IMR-90 (cell line): ENCODE measurements at regions of chr4 and their contacts with region 1.

Region 1: DNA sequence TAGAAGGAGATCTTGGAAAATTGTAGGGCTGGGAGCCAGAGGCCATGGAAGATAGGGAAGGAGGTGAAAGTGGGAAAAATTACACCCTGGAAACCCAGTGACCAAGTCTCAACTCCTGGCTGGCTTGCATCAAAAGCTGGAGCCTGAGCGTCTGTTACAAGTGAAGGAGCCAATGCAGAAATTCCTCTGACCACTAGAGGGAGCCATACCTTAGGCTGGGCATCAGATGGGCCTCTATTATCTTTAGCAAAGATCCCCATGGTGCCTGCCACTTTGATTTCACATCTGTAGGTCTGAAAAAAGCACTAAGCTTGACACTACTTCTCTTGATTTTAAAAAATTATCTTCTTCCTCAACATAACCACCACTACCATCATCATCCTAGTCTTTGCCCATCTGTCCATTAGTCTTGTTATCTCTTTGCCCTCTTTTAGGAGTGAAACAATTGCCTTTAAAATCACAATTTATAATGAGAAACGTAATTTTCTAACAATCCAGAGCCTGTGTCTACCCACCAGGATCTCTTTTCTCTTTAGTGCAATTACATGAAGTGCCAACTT is 62.9 kb downstream of the ANAPC4 start:
- DNase-seq: peak; percentile 68
- ATAC-seq: peak; percentile 88
- H3K4me3 ChIP-seq: no peak overlapping the region
- H3K27ac ChIP-seq: no peak overlapping the region
- H3K4me1 ChIP-seq: no peaks in the 10 kb centered on the region
- H3K27me3 ChIP-seq: peaks cover 5% of the 10 kb centered on the region
- CTCF ChIP-seq: peak; percentile 86
- POLR2A ChIP-seq: no peak
- RAD21 ChIP-seq: peak; percentile 71

Region 2: DNA sequence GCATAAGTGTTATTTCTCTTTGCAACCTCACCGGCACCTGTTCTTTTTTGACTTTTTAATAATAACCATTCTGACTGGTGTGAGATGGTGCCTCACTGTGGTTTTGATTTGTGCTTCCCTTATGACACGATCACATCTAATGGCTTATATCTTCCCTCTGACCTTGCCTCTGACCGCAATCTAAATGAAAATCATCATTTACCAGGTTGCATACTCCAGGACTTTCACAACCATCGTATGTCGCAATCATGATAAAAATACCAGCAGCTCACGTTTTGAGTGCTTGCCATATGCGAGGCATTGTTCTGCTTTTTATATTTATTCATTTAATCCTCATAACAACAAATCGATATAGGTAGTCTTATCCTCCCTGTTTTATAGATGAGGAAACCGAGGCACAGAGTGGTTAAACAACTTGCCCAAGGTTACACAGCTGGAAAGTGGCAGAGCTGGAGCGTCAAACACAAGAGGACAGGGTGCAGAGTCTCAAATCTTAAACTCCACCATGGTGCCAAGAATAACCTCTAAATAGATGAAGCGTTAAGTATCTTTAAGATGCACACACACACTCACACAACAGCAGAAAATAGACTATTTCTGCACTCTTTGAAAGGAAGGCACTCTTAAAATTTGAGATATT is 320.6 kb after region 1 on chr4:
- CTCF ChIA-PET with region 1: interaction called, 5 read pairs
- POLR2A ChIA-PET with region 1: no interaction called
- dilution Hi-C with region 1: no loop called
- in situ Hi-C with region 1: loop called (anchors 5 kb)
- intact Hi-C with region 1: no loop called
- DNase-seq: peak; percentile 49
- ATAC-seq: 0 out of 2 replicates have a peak, but pooled peaks have one; percentile 27
- H3K4me3 ChIP-seq: no peak overlapping the region
- H3K27ac ChIP-seq: no peak overlapping the region
- H3K4me1 ChIP-seq: peaks cover 2% of the 10 kb centered on the region; the same call in 1 of the 2 replicates
- H3K27me3 ChIP-seq: no peaks in the 10 kb centered on the region
- CTCF ChIP-seq: no peak
- POLR2A ChIP-seq: no peak
- RAD21 ChIP-seq: no peak

Region 3: GRCh38 chr4:25767877-25768725 is 328.1 kb after region 1 on chr4:
- CTCF ChIA-PET with region 1: interaction called, 66 read pairs
- POLR2A ChIA-PET with region 1: no interaction called
- dilution Hi-C with region 1: no loop called
- in situ Hi-C with region 1: loop called (anchors 5 kb)
- intact Hi-C with region 1: loop called (anchors 1 kb)
- DNase-seq: peak; percentile 79
- ATAC-seq: peak; percentile 93
- H3K4me3 ChIP-seq: no peak overlapping the region
- H3K27ac ChIP-seq: no peak overlapping the region
- H3K4me1 ChIP-seq: no peaks in the 10 kb centered on the region
- H3K27me3 ChIP-seq: no peaks in the 10 kb centered on the region
- CTCF ChIP-seq: peak; percentile 86
- POLR2A ChIP-seq: no peak
- RAD21 ChIP-seq: peak; percentile 88

Region 4: GRCh38 chr4:25862411-25863346 is 422.7 kb after region 1 on chr4 and contains the start of gene SEL1L3:
- CTCF ChIA-PET with region 1: interaction called, 3 read pairs
- POLR2A ChIA-PET with region 1: no interaction called
- dilution Hi-C with region 1: no loop called
- in situ Hi-C with region 1: no loop called
- intact Hi-C with region 1: loop called (anchors 5 kb)
- DNase-seq: no peak
- ATAC-seq: peak; percentile 62
- H3K4me3 ChIP-seq: peak within 1 kb of the TSS; percentile 49
- H3K27ac ChIP-seq: peak within 1 kb of the TSS; percentile 19
- H3K4me1 ChIP-seq: peaks cover 2% of the 10 kb centered on the region; the same call in 1 of the 2 replicates
- H3K27me3 ChIP-seq: no peaks in the 10 kb centered on the region
- CTCF ChIP-seq: no peak
- POLR2A ChIP-seq: no peak; the same call in 1 of the 2 replicates
- RAD21 ChIP-seq: no peak
- total RNA-seq, gene SEL1L3: 31.7 and 43.7 TPM in 2 replicates

Region 5: DNA sequence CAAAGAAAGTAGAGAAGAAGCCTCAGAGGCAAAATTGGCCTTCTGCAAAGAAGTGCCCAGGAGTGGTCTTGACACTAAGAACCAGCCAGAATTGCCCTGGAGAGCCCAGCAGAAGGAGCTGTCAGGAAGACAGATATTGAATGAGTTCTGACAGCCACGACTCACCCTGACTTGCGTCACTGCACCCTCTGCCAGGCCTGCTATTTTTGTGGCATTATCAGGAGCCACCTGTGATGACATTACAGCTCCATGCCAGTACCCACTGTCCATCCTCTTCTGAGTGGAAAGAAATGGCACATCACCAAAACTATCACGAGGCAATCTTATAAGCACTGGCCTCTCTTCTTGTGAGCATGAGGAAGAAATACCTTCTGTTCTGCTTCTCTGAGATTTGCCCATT is 541.8 kb after region 1 on chr4:
- CTCF ChIA-PET with region 1: no interaction called
- POLR2A ChIA-PET with region 1: no interaction called
- dilution Hi-C with region 1: no loop called
- in situ Hi-C with region 1: no loop called
- intact Hi-C with region 1: loop called (anchors 10 kb)
- DNase-seq: no peak
- ATAC-seq: no peak
- H3K4me3 ChIP-seq: no peak overlapping the region
- H3K27ac ChIP-seq: no peak overlapping the region
- H3K4me1 ChIP-seq: 0 out of 2 replicates have a peak, but pooled peaks cover 2% of the 10 kb centered on the region
- H3K27me3 ChIP-seq: peaks cover 2% of the 10 kb centered on the region; the same call in 1 of the 2 replicates
- CTCF ChIP-seq: no peak
- POLR2A ChIP-seq: no peak
- RAD21 ChIP-seq: no peak